Vagina (tissue), 2 donors: ENCODE measurements at regions of chr5 and their contacts with region 1.

Region 1: DNA sequence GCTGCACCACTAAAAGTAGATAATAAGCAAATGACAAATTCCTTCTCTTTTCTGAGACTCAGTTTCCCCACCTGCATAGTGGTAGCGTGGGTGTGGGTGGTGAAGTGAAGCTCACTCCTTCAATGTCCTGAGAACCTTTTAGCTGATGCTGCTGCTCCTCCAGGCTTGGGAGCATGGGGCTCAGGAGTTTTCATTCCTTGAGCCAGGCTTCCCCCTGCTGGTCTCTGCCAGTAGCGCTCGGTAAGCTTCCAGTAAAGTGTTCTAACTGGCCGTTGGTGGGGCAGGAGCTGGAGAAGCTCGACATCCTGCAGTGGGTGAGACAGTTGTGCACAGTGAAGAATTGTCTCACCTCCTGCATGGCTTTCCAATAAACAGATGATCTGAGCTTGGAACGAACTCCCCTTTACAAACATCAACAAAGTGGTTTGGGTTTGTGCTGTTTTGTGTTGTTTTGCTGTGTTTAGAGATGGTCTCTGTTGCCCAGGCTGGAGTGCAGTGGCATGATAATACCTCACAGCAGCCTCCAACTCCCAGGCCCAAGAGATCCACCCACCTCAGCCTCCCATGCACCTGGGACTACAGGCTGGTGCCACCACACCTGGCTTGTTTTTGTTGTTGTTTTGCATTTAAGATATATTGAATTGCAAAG is 34.6 kb downstream of the SPARC start:
- DNase-seq: no peak
- H3K4me3 ChIP-seq: no peak overlapping the region
- H3K27ac ChIP-seq: no peak overlapping the region
- H3K4me1 ChIP-seq: no peaks in the 10 kb centered on the region
- H3K27me3 ChIP-seq: no peaks in the 10 kb centered on the region
- CTCF ChIP-seq: peak; percentile 43 to 84 (median 83)
- POLR2A ChIP-seq: no peak

Region 2: DNA sequence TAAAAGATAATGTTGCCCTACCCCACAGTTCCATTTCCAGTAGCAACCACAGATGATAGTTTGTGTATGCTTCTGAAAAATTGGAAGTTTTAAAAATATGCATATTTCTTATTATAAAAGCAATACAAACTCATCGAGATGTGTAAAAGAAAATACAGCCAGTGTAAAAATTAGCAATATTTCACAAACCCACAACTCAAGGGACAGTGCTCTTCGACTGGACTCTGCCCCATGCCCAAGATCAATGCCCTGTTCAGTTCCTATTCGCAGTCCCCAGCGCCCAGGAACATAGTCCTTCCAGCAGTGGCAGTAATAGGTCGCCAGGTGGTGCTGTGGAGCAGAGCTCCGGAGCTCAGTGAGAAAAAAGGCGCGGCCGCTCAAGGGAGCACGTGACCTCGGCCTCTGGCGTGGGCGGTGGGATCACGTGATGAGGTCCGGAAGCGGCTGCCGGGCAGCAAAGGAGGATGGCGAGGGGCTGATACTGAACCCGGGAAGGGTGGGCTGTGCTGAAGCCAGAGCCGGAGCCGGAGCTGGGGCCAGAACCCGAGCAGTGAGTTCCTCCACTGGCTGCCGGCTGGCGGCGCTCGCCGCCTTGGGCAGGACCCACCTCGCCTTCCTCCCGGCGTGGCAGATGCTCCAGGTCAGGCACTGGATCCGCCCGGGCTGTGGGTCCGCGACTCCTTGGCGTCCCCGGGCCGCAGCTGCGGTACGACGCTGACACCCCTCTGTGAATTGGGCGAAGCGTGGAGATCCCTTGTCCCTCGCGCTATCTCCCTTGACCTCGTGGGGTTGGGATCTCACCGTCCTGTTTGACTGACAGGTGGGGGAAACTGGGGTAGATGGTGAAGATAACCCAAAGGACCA is 204.7 kb before region 1 on chr5 and contains the start of gene SLC36A1:
- intact Hi-C with region 1: loop called (anchors 5 kb)
- DNase-seq: peak in 1 of 2 donors; percentile 95
- H3K4me3 ChIP-seq: peak within 1 kb of the TSS; percentile 55 to 82
- H3K27ac ChIP-seq: peak within 1 kb of the TSS; percentile 77
- H3K4me1 ChIP-seq: peaks cover 13% of the 10 kb centered on the region
- H3K27me3 ChIP-seq: no peaks in the 10 kb centered on the region
- CTCF ChIP-seq: peak; percentile 91 to 99 (median 95)
- POLR2A ChIP-seq: no peak
- total RNA-seq, gene SLC36A1: 10.8 TPM

Region 3: DNA sequence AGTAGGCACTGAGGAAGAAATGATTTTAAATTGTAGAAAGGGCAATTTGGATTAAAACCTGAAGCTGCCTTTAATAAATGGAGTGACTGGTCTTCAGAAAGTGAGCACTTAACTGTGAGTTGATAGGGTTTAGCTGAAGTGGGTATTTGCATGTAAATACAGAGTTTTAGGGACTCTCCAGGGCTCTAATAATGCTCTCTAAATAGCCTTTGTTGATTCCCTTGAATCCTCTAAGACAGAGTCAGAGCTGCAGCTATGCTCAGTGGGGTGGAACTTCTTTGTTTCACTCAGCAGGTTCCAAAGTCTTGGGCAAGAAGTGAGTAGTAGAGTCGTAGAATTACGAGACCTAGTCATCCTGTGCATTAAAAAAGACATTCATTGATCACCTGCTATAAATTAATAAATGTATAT is 251.1 kb after region 1 on chr5:
- intact Hi-C with region 1: no loop called
- DNase-seq: no peak
- H3K4me3 ChIP-seq: no peak overlapping the region
- H3K27ac ChIP-seq: no peak overlapping the region
- H3K4me1 ChIP-seq: no peaks in the 10 kb centered on the region
- H3K27me3 ChIP-seq: no peaks in the 10 kb centered on the region
- CTCF ChIP-seq: no peak
- POLR2A ChIP-seq: no peak